Aorta (tissue), 5 donors: ENCODE measurements at regions of chr3 and their contacts with region 1.

Region 1: DNA sequence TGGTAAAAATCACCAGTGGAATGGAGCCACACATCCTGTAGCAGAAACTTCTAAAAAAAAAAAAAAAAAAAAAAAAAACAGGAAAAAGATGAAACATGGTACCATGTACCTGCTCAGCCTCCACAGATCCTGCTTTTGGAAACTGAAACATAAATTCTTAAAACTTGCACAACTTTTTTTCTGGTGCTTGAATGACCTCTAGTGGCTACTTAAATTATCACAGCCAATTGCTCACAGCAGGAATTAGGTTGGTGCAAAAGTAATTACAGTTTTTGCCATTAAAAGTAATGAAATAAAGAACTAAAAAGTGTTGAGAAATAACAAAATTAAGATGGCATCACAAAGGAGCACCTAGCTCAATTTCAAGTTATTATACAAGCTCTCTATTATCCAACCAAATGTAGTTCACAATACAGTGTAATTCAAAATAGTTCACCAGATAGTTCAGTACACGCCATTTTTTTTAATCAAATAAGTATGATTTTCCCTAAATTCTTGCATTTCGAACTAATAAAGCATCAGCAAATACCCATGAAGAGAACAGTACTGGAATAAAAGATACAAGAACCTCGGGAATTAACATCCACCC is 80.6 kb downstream of the ULK4 start:
- DNase-seq: no peak
- ATAC-seq: no peak
- H3K4me3 ChIP-seq: no peak overlapping the region
- H3K27ac ChIP-seq: no peak overlapping the region
- H3K4me1 ChIP-seq: no peaks in the 10 kb centered on the region
- H3K27me3 ChIP-seq: no peaks in the 10 kb centered on the region

Region 2: DNA sequence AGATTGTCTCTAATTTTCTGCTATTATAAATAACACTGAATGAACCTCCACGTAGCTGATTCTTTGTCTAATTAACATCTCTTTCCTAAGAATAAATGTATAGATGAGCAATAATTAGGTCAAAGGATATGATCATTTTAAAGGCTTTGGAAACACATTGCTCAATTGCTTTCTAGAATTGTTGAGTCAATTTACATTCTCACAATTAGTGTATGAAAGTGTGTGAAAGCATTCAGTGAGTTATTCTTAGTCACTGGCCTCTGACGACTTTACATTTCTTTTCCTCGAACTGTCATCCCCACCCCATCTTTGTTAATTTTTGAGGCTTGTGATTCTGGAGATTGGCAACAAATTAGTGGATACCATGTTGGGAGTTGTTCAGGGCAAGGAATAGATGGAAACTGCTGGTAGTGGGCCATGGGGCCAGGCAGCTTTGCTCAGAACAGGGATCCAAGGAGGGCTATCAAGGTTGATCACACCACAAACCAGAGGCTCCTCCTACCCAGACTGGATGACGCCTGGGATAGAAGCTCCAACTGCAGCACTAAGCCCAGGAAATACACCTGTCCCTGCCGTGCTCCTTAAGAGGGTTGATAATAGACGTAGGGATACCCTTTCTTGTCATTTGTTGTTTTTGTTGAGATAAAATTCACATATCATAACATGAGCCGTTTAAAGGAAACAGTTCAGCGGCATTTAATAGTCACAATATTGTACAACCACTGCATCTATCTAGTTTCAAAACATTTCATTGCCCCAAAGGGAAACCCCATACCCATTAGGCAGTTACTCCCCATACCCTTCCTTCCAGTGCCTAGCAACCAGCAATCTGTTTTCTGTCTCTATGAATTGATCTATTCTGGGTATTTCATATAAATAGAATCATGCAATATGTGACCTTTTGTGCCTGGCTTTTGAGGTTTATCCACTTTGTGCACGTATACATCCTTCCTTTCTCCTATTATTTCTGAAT is 1543.9 kb before region 1 on chr3:
- intact Hi-C with region 1: loop called in 1 of 2 experiments (anchors 5 kb)
- DNase-seq: no peak
- ATAC-seq: no peak
- H3K4me3 ChIP-seq: no peak overlapping the region
- H3K27ac ChIP-seq: no peak overlapping the region
- H3K4me1 ChIP-seq: no peaks in the 10 kb centered on the region
- H3K27me3 ChIP-seq: no peaks in the 10 kb centered on the region

Region 3: DNA sequence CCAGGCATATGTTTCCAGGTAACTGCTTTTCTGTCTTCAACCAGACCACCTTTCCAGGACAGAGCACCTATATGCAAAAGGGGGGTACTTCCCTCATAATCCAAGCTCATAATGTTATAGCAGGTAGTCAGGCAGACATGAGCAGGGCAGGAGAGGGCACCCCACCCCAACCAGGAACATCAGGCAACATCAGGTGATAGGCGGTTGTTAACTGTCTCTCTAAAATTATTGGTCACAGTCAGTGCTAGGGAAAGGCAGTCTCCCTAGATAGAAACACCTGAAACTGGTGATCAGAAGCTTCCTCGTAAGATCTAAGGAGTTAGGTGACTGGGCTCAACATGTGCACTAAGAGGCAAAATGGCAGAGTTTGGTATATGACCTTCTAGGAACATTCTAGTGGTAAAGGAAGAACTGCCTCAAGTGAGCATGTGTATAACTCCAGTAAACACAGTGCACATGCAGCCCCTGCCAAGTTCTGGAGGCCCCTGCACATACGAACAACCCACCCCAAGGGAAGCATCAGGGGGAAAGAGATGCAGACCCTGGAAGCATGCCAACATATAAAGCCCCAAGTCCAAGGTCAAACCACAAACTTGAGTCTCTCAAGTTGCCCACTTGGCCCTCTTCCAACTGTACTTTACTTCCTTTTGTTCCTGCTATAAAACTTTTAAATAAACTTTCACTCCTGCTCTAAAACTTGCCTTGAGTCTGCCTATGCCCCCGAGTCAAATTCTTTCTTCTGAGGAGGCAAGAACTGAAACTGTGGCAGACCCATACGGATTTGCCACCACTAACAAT is 190.4 kb before region 1 on chr3:
- intact Hi-C with region 1: loop called in 1 of 2 experiments (anchors 10 kb)
- DNase-seq: no peak
- ATAC-seq: no peak
- H3K4me3 ChIP-seq: no peak overlapping the region
- H3K27ac ChIP-seq: no peak overlapping the region
- H3K4me1 ChIP-seq: no peaks in the 10 kb centered on the region
- H3K27me3 ChIP-seq: no peaks in the 10 kb centered on the region

Region 4: GRCh38 chr3:42012935-42013690 is 131.8 kb after region 1 on chr3:
- intact Hi-C with region 1: no loop called
- DNase-seq: peak; percentile 84 to 93
- ATAC-seq: peak; percentile 91
- H3K4me3 ChIP-seq: peak overlapping the region; percentile 75 to 80
- H3K27ac ChIP-seq: peak overlapping the region in 1 of 2 donors; percentile 73
- H3K4me1 ChIP-seq: no peaks in the 10 kb centered on the region
- H3K27me3 ChIP-seq: no peaks in the 10 kb centered on the region